A549 (cell line): ENCODE measurements at regions of chr17 and their contacts with region 1.

Region 1: GRCh38 chr17:69567130-69567529 is 152.6 kb downstream of the MAP2K6 start:
- DNase-seq: no peak
- ATAC-seq: no peak
- H3K4me3 ChIP-seq: no peak overlapping the region
- H3K27ac ChIP-seq: no peak overlapping the region
- H3K4me1 ChIP-seq: no peaks in the 10 kb centered on the region
- CTCF ChIP-seq: no peak
- EP300 ChIP-seq: no peak
- POLR2A ChIP-seq: no peak
- RAD21 ChIP-seq: no peak

Region 2: GRCh38 chr17:69531233-69531632 is 35.9 kb before region 1 on chr17:
- CTCF ChIA-PET with region 1: interaction called, 16 read pairs
- POLR2A ChIA-PET with region 1: no interaction called
- DNase-seq: no peak
- ATAC-seq: no peak
- H3K4me3 ChIP-seq: no peak overlapping the region
- H3K27ac ChIP-seq: no peak overlapping the region
- H3K4me1 ChIP-seq: no peaks in the 10 kb centered on the region
- CTCF ChIP-seq: no peak
- EP300 ChIP-seq: no peak
- POLR2A ChIP-seq: no peak
- RAD21 ChIP-seq: no peak

Region 3: DNA sequence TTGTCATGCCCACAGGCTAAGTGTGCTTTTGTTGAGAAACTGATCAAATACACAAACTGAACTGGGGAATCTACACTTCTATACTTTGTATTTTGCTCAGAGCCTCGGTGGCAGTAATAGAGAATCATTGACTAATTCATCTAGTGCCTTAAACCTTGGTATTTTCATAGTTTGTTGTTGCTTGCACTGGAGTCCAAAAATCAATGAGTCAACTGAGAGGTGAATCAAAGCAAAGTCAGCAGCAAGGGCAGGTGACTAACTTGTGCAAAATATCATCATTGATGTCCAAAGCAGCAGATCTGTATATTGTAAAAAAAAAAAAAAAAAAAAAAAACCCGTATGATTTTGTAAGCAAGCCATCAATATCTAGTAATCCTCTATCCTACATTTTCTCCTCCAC is 143.8 kb after region 1 on chr17:
- CTCF ChIA-PET with region 1: no interaction called
- POLR2A ChIA-PET with region 1: no interaction called
- DNase-seq: no peak
- ATAC-seq: no peak
- H3K4me3 ChIP-seq: no peak overlapping the region
- H3K27ac ChIP-seq: no peak overlapping the region
- H3K4me1 ChIP-seq: peaks cover 42% of the 10 kb centered on the region
- CTCF ChIP-seq: no peak
- EP300 ChIP-seq: no peak
- POLR2A ChIP-seq: no peak
- RAD21 ChIP-seq: no peak

Region 4: GRCh38 chr17:70622368-70623260 is 1055.5 kb after region 1 on chr17:
- CTCF ChIA-PET with region 1: interaction called, 10 read pairs
- POLR2A ChIA-PET with region 1: no interaction called
- DNase-seq: peak; percentile 25 to 34
- ATAC-seq: peak; percentile 54 to 80; a peak in 4 of 6 replicates
- H3K4me3 ChIP-seq: no peak overlapping the region
- H3K27ac ChIP-seq: no peak overlapping the region
- H3K4me1 ChIP-seq: no peaks in the 10 kb centered on the region
- CTCF ChIP-seq: peak; percentile 67
- EP300 ChIP-seq: no peak
- POLR2A ChIP-seq: no peak
- RAD21 ChIP-seq: peak; percentile 72 to 76